PC-9 (cell line): ENCODE measurements at regions of chr1 and their contacts with region 1.

Region 1: DNA sequence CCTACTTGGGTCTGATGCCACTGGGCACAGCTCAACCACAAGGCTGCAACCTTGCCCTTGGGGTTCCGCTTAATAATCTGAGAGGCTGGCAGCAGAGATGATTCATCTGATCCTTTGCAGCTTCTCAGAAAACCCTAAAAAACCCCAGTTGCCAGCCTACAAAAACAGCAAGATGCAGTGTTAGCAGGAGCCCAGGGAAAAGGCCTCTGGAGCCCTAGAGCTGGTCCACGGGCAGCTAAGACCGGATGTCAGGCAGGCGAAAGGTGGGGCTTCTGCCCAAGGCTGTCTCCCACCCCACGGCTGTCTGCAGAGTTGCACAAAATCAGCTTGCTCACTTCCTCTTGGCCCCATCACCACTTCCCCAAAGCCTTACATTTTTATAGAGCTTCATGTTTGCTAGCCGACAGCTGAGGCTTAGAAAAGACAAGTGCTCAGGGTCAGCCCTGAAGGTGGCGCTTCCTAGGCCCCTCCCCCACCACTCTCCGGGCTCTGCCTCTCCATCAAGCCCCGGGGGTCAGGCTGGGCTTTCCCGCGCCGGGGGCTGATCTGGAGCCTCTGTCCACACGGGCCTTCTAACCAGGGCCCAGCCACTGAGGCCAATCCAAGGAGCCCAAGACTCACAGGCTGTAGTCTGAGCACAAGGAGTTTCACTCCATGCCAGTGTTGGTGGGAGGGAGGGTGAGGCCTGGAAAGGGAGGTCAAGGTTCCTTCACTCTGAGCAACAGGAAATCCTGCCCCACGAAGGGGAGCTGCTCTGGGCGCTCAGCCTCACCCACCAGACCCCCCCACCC is 4.2 kb upstream of the ADORA3 start:
- DNase-seq: peak; percentile 56 to 81
- H3K4me3 ChIP-seq: peak overlapping the region; percentile 53
- H3K27ac ChIP-seq: peak overlapping the region; percentile 74
- H3K4me1 ChIP-seq: peaks cover 26% of the 10 kb centered on the region
- H3K27me3 ChIP-seq: no peaks in the 10 kb centered on the region
- CTCF ChIP-seq: no peak

Region 2: GRCh38 chr1:111481387-111482221 is 26.0 kb before region 1 on chr1:
- CTCF ChIA-PET with region 1: interaction called, 13 read pairs
- POLR2A ChIA-PET with region 1: no interaction called
- intact Hi-C with region 1: no loop called
- DNase-seq: peak; percentile 80 to 81
- H3K4me3 ChIP-seq: no peak overlapping the region
- H3K27ac ChIP-seq: no peak overlapping the region
- H3K4me1 ChIP-seq: peaks cover 7% of the 10 kb centered on the region; the same call in 1 of the 2 replicates
- H3K27me3 ChIP-seq: no peaks in the 10 kb centered on the region
- CTCF ChIP-seq: peak; percentile 86

Region 3: GRCh38 chr1:111592389-111593361 is 85.1 kb after region 1 on chr1:
- CTCF ChIA-PET with region 1: interaction called, 5 read pairs
- POLR2A ChIA-PET with region 1: no interaction called
- intact Hi-C with region 1: loop called (anchors 2 kb)
- DNase-seq: peak; percentile 87 to 98
- H3K4me3 ChIP-seq: peak overlapping the region; percentile 43
- H3K27ac ChIP-seq: peak overlapping the region; percentile 78
- H3K4me1 ChIP-seq: peaks cover 36% of the 10 kb centered on the region
- H3K27me3 ChIP-seq: no peaks in the 10 kb centered on the region
- CTCF ChIP-seq: no peak

Region 4: GRCh38 chr1:111648806-111649205 is 141.2 kb after region 1 on chr1:
- CTCF ChIA-PET with region 1: no interaction called
- POLR2A ChIA-PET with region 1: interaction called, 3 read pairs
- intact Hi-C with region 1: loop called (anchors 2 kb)
- DNase-seq: no peak
- H3K4me3 ChIP-seq: no peak overlapping the region
- H3K27ac ChIP-seq: no peak overlapping the region
- H3K4me1 ChIP-seq: peaks cover 23% of the 10 kb centered on the region
- H3K27me3 ChIP-seq: no peaks in the 10 kb centered on the region
- CTCF ChIP-seq: no peak

Region 5: DNA sequence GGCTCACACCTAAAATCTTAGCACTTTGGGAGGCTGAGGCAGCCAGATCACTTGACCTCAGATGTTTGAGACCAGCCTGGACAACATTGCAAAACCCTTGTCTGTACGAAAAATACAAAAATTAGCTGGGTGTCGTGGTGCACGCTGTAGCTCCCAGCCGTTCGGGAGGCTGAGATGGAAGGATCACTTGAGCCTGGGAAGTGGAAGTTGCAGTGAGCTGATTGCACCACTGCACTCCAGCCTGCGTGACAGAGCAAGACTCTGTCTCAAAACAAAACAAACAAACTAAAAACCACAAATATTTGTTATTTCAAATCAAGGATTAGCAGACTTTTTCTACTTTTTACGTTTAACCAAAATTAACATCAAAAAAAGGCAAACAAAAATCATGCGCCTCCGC is 200.3 kb after region 1 on chr1:
- CTCF ChIA-PET with region 1: interaction called, 3 read pairs
- POLR2A ChIA-PET with region 1: interaction called, 11 read pairs
- intact Hi-C with region 1: no loop called
- DNase-seq: no peak
- H3K4me3 ChIP-seq: no peak overlapping the region
- H3K27ac ChIP-seq: no peak overlapping the region
- H3K4me1 ChIP-seq: peaks cover 12% of the 10 kb centered on the region
- H3K27me3 ChIP-seq: no peaks in the 10 kb centered on the region
- CTCF ChIP-seq: no peak